ENCODE measurements at regions of chr13 and their contacts with region 1.

Region 1: DNA sequence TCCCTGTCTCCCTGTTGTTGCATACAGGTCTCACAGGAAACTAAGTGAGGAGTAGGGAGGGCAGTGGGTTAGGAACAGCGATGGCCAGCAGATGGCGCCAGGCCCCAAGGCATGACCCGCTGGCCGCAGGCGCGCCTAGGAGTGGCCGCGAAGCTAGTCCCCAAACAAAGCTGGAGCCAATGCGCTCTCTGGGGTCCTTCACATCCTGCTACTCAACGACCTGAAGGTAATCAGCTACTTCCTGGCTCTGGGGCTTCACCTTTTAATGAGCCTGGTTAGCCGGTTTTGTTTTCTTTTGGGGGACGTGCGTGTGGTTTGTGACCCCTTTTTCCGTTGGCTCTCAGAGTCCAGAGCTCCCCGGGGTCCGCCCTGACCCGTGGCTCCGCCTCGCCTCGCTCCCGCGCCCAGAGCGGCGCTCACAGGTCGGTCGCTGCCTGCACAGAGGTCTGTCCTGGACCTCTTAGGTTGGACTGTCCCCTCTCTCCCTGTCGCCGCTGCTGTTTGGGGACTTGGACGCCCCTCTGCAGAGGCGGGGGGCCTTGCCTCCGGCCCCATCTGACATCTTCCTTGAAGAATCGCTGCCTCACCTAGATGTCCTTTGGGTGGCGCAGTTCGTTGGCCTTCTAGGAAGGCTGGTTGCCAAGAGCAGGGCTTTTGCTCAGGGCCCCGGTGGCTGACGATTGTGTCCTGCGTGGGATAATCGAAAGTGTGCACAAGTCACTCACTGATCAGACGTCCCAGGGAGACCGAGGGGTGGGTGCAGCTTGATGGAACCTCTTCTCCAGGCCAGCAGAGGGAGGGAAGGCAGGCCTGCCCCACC is 62.1 kb upstream of the GTF3A start:
- DNase-seq: peak; percentile 85
- H3K4me3 Mint-ChIP-seq: no peak overlapping the region
- H3K27ac Mint-ChIP-seq: no peak overlapping the region
- H3K4me1 Mint-ChIP-seq: no peaks in the 10 kb centered on the region
- H3K27me3 Mint-ChIP-seq: peaks cover 18% of the 10 kb centered on the region

Region 2: DNA sequence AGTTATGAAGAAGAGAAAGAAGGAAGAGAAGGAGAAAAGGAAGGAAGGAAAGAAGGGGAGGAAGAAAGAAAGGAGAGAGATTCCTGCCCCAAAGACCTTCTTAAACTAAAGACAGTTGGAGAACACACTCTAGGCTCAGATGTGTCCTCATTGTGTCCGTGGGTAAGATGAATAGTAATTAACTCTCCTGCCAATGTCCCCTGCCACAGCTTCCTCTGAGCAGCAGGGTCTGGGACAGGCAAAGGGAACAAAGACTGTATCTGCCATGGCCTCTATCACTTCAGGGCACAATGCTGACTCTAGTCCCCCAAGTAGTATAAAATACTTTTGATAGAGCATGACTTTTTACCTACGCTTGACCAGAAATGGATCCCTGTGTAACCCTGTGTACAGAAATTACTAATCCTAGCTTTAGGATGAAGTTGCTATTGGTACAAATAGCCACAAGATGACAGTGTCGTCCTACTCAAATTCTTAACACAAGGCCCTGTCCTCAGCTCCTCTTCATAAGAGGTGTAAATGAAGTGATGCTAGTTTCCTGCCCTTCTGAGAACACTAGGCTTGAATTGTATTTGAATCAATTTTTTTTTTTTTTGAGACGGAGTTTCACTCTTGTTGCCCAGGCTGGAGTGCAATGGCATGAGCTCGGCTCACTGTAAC is 415.5 kb before region 1 on chr13:
- CTCF ChIA-PET with region 1: interaction called, 16 read pairs
- intact Hi-C with region 1: loop called (anchors 1 kb)
- DNase-seq: no peak
- H3K4me3 Mint-ChIP-seq: no peak overlapping the region
- H3K27ac Mint-ChIP-seq: no peak overlapping the region
- H3K4me1 Mint-ChIP-seq: no peaks in the 10 kb centered on the region
- H3K27me3 Mint-ChIP-seq: no peaks in the 10 kb centered on the region

Region 3: GRCh38 chr13:27599845-27600553 is 237.7 kb after region 1 on chr13:
- CTCF ChIA-PET with region 1: no interaction called
- intact Hi-C with region 1: no loop called
- DNase-seq: no peak
- H3K4me3 Mint-ChIP-seq: no peak overlapping the region
- H3K27ac Mint-ChIP-seq: no peak overlapping the region
- H3K4me1 Mint-ChIP-seq: peaks cover 8% of the 10 kb centered on the region
- H3K27me3 Mint-ChIP-seq: no peaks in the 10 kb centered on the region

Region 4: GRCh38 chr13:27896726-27897125 is 534.5 kb after region 1 on chr13:
- CTCF ChIA-PET with region 1: no interaction called
- intact Hi-C with region 1: no loop called
- DNase-seq: no peak
- H3K4me3 Mint-ChIP-seq: no peak overlapping the region
- H3K27ac Mint-ChIP-seq: no peak overlapping the region
- H3K4me1 Mint-ChIP-seq: no peaks in the 10 kb centered on the region
- H3K27me3 Mint-ChIP-seq: peaks cover 46% of the 10 kb centered on the region